IMR-90 (cell line): ENCODE measurements at regions of chr19 and their contacts with region 1.

Region 1: DNA sequence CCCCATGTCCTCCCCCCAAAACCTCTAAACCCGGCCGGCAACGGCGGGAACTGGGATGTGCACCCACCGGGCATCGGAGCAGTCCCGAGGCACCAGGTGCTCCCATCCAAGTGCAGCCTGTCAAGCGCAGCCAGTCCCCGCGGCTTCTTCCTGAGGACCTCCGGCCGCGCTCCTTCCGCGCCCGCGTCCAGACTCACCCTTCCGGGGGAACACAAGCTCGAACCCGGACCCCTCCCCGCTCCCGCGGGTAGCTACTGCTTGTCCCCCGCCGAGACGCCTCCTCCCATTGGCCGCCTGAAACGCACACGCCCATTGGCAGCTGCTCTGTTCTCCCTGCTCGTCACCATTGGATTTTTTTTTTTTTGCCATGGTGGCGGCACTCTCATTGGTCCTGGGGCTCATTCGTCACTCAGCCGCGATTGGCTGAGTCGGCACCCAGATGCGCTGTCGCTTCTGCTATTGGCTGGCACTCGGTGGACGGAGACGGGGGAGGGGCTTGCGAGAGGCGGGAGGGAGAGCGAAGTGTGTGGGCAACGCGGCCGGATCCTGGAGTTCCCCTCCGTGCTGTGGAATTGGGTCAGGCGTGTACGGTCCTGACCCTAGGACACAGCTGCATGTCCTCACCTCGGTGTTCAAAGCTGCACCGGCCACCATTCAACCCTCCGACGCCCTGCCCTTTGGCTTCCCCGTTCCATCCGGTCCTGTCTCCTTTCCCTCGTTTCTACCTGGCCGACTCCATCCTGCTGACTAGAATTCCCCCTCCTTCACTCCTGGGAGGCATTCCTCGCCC is at the start of gene TYK2:
- DNase-seq: peak; percentile 98
- ATAC-seq: peak; percentile 98
- H3K4me3 ChIP-seq: peak within 1 kb of the TSS; percentile 65
- H3K27ac ChIP-seq: peak within 1 kb of the TSS; percentile 73
- H3K4me1 ChIP-seq: peaks cover 2% of the 10 kb centered on the region
- H3K27me3 ChIP-seq: no peaks in the 10 kb centered on the region
- CTCF ChIP-seq: no peak
- POLR2A ChIP-seq: no peak
- RAD21 ChIP-seq: no peak
- total RNA-seq, gene TYK2: 35.6 and 40.9 TPM in 2 replicates

Region 2: GRCh38 chr19:9923440-9923839 is 457.1 kb before region 1 on chr19:
- CTCF ChIA-PET with region 1: no interaction called
- POLR2A ChIA-PET with region 1: no interaction called
- dilution Hi-C with region 1: no loop called
- in situ Hi-C with region 1: loop called (anchors 10 kb)
- intact Hi-C with region 1: no loop called
- DNase-seq: no peak
- ATAC-seq: no peak
- H3K4me3 ChIP-seq: no peak overlapping the region
- H3K27ac ChIP-seq: no peak overlapping the region
- H3K4me1 ChIP-seq: no peaks in the 10 kb centered on the region
- H3K27me3 ChIP-seq: no peaks in the 10 kb centered on the region
- CTCF ChIP-seq: no peak
- POLR2A ChIP-seq: no peak
- RAD21 ChIP-seq: no peak

Region 3: GRCh38 chr19:10238172-10238783 is 142.2 kb before region 1 on chr19:
- CTCF ChIA-PET with region 1: no interaction called
- POLR2A ChIA-PET with region 1: no interaction called
- dilution Hi-C with region 1: no loop called
- in situ Hi-C with region 1: no loop called
- intact Hi-C with region 1: no loop called
- DNase-seq: peak; percentile 91
- ATAC-seq: peak; percentile 89
- H3K4me3 ChIP-seq: no peak overlapping the region
- H3K27ac ChIP-seq: peak overlapping the region; percentile 66
- H3K4me1 ChIP-seq: peaks cover 12% of the 10 kb centered on the region
- H3K27me3 ChIP-seq: no peaks in the 10 kb centered on the region
- CTCF ChIP-seq: no peak
- POLR2A ChIP-seq: no peak
- RAD21 ChIP-seq: 0 out of 2 replicates have a peak, but pooled peaks have one; percentile 9